ENCODE measurements at regions of chrX and their contacts with region 1.

Region 1: DNA sequence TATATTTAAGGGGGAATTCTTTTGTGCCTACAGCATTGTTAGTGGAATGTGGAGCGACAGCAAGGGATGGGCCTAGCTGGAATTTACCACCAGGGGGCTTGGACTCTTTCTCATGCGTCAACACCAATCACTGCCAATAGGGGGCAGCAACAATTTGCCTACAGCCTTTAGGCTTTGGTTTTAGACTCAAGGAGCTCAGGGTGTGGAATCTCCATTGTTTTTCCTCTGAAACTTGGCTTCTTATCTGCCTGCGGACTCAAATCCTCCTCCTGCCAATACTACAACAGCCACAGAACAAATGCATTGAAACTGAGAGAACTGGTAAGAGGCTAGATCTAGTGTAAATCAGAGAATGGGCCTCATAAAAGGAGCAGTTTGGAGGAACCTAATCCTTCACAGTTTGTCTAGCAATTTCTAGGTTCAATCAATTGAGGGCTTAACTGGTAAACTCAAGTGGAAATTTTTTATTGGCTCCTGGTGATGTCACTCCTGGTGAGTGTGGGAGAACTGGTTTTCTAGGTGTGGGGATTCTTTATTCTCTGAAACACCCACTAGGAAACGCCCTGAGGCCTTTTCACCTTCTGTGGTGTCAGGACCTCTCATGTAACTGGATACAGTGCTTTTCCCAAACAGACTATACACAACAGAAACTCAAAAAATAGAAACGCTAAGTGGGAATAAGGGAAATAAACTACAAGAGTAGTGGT is 27.9 kb upstream of the TMSB4X start:
- DNase-seq: peak; percentile 83
- ATAC-seq: peak; percentile 19
- H3K4me3 Mint-ChIP-seq: peak overlapping the region; percentile 65
- H3K27ac Mint-ChIP-seq: peak overlapping the region; percentile 95
- H3K4me1 Mint-ChIP-seq: peaks cover 47% of the 10 kb centered on the region
- H3K27me3 Mint-ChIP-seq: no peaks in the 10 kb centered on the region
- CTCF ChIP-seq: peak; percentile 87

Region 2: DNA sequence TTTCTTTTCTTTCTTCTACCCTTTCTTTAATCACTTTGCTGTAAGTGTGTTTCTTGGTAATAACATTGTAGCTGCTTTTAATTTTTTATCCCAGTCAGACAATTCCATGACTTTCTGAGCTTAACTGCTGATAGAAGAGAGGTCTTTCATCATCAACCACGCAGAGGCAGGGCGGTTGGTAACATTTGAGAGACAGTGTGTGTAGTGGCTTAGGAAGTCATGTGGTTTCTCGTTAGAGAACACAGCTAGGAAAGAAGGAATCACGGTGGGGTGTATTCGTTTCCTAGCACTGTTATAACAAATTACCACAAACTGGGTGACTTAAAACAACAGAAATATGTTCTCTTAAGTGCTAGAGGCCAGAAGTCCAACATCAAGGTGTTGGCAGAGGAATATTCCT is 144.2 kb before region 1 on chrX:
- CTCF ChIA-PET with region 1: no interaction called
- POLR2A ChIA-PET with region 1: no interaction called
- intact Hi-C with region 1: no loop called
- DNase-seq: peak; percentile 9
- ATAC-seq: peak; percentile 53
- H3K4me3 Mint-ChIP-seq: no peak overlapping the region
- H3K27ac Mint-ChIP-seq: peak overlapping the region; percentile 89
- H3K4me1 Mint-ChIP-seq: peaks cover 19% of the 10 kb centered on the region
- H3K27me3 Mint-ChIP-seq: no peaks in the 10 kb centered on the region
- CTCF ChIP-seq: no peak

Region 3: GRCh38 chrX:12843668-12844279 is 103.2 kb before region 1 on chrX:
- CTCF ChIA-PET with region 1: no interaction called
- POLR2A ChIA-PET with region 1: no interaction called
- intact Hi-C with region 1: no loop called
- DNase-seq: no peak
- ATAC-seq: peak; percentile 69
- H3K4me3 Mint-ChIP-seq: peak overlapping the region; percentile 51
- H3K27ac Mint-ChIP-seq: peak overlapping the region; percentile 85
- H3K4me1 Mint-ChIP-seq: peaks cover 15% of the 10 kb centered on the region
- H3K27me3 Mint-ChIP-seq: no peaks in the 10 kb centered on the region
- CTCF ChIP-seq: no peak

Region 4: DNA sequence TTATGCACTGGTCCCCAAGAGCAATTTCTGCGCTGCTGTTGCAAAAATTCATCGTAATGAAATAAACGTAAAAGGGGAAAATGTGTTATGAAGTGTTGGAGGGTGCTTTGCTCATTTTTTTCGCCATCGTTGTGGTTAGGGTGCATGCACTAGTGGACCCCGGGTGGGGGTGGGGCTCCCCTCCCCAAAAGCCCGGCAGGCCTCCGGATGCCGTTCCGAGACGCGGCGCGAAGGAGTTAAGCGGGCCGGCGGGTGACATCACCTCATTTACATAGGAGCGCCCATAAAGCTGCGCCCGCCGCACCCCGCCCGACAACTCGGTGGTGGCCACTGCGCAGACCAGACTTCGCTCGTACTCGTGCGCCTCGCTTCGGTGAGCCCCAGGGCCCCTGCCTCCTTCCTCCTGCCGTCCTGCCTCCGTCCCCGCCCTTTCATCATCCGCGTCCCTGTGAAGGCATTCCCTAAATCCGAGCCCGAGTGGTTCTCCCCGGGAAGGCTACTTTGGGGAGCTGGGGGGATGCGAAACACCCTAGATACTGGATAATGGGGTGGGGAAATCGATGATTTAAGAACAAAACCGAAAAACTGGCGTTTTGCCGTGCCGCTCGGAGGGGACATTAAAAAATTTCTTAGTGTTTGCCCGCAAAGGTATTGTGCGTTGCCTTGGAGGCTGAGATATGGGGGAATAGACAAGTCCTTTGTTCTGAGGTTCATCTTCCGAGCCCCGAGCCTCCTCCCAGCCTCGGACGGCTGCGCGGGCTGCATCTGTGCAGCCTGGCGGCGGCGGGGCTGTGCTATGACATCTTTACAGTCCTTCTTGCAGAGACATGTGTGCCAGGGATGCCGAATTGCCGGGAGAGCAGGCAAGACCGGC is 28.0 kb after region 1 on chrX and contains the start of gene TMSB4X:
- CTCF ChIA-PET with region 1: interaction called, 150 read pairs
- POLR2A ChIA-PET with region 1: interaction called, 621 read pairs
- intact Hi-C with region 1: no loop called
- DNase-seq: peak; percentile 87
- ATAC-seq: peak; percentile 48
- H3K4me3 Mint-ChIP-seq: peak within 1 kb of the TSS; percentile 91
- H3K27ac Mint-ChIP-seq: peak within 1 kb of the TSS; percentile 95
- H3K4me1 Mint-ChIP-seq: peaks cover 15% of the 10 kb centered on the region
- H3K27me3 Mint-ChIP-seq: no peaks in the 10 kb centered on the region
- CTCF ChIP-seq: no peak
- total RNA-seq, gene TMSB4X: 5,169 to 5,393 TPM

Region 5: GRCh38 chrX:13000301-13000811 is 53.4 kb after region 1 on chrX:
- CTCF ChIA-PET with region 1: interaction called, 13 read pairs
- POLR2A ChIA-PET with region 1: interaction called, 8 read pairs
- intact Hi-C with region 1: no loop called
- DNase-seq: peak; percentile 67
- ATAC-seq: peak; percentile 46
- H3K4me3 Mint-ChIP-seq: peak overlapping the region; percentile 74
- H3K27ac Mint-ChIP-seq: peak overlapping the region; percentile 96
- H3K4me1 Mint-ChIP-seq: peaks cover 65% of the 10 kb centered on the region
- H3K27me3 Mint-ChIP-seq: no peaks in the 10 kb centered on the region
- CTCF ChIP-seq: no peak

Region 6: GRCh38 chrX:13094828-13095341 is 147.9 kb after region 1 on chrX:
- CTCF ChIA-PET with region 1: interaction called, 47 read pairs
- POLR2A ChIA-PET with region 1: interaction called, 9 read pairs
- intact Hi-C with region 1: loop called (anchors 2 kb)
- DNase-seq: no peak
- ATAC-seq: no peak
- H3K4me3 Mint-ChIP-seq: peak overlapping the region; percentile 36
- H3K27ac Mint-ChIP-seq: peak overlapping the region; percentile 97
- H3K4me1 Mint-ChIP-seq: peaks cover 76% of the 10 kb centered on the region
- H3K27me3 Mint-ChIP-seq: no peaks in the 10 kb centered on the region
- CTCF ChIP-seq: no peak

Region 7: DNA sequence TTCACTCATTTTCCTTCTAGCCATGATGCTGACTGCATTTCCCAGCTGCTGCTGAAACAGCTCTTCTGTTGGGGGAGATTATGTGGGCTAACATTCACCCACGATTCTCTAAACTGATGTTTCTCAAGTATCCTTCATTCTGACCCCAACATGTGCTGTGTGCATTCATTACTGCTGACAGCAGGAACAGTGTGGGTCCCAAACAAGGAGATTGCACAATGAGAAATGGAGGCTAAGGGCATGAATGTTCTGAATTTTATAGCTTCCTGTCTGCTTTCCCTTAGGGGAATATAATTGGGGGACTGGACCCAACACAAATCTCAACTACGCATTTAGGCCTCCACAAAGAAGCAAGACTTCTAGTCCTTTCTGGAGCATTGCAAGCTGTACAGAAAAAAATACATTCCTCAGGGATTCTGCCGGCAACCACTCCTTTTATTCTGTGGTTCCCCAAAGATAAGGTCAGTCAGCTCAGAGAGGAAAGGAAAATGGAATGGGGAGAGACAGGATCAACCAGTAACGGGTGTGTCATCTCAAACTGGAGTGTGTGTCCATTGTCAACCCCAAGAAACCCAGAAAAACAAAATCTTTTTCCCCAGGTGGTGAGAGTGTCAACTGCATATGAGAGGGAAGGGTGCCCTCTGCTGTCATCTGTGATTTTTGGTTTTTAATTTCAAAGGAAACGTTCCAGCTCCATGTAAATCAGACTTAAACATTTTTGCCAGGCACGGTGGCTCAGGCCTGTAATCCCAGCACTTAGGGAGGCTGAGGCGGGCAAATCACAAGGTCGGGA is 540.9 kb after region 1 on chrX:
- CTCF ChIA-PET with region 1: interaction called, 46 read pairs
- POLR2A ChIA-PET with region 1: interaction called, 6 read pairs
- intact Hi-C with region 1: loop called (anchors 2 kb)
- DNase-seq: peak; percentile 60
- ATAC-seq: peak; percentile 79
- H3K4me3 Mint-ChIP-seq: no peak overlapping the region
- H3K27ac Mint-ChIP-seq: peak overlapping the region; percentile 80
- H3K4me1 Mint-ChIP-seq: peaks cover 35% of the 10 kb centered on the region
- H3K27me3 Mint-ChIP-seq: no peaks in the 10 kb centered on the region
- CTCF ChIP-seq: peak; percentile 35

Measured in activated CD8-positive, alpha-beta T cell treated with anti-CD3 and anti-CD28 coated beads for 36 hours (primary cell).